Gastrocnemius medialis (tissue), 4 donors: ENCODE measurements at regions of chr1 and their contacts with region 1.

Region 1: GRCh38 chr1:17606826-17607440 is 67.4 kb downstream of the ARHGEF10L start:
- DNase-seq: peak in 1 of 2 donors; percentile 63
- ATAC-seq: peak; percentile 55 to 85
- H3K4me3 ChIP-seq: no peak overlapping the region
- H3K27ac ChIP-seq: peak overlapping the region in 3 of 4 donors; percentile 49 to 73 (median 65)
- H3K4me1 ChIP-seq: peaks cover 11 to 13% of the 10 kb centered on the region in 2 donors
- H3K27me3 ChIP-seq: no peaks in the 10 kb centered on the region
- CTCF ChIP-seq: peak; percentile 90 to 97 (median 95)
- POLR2A ChIP-seq: no peak

Region 2: DNA sequence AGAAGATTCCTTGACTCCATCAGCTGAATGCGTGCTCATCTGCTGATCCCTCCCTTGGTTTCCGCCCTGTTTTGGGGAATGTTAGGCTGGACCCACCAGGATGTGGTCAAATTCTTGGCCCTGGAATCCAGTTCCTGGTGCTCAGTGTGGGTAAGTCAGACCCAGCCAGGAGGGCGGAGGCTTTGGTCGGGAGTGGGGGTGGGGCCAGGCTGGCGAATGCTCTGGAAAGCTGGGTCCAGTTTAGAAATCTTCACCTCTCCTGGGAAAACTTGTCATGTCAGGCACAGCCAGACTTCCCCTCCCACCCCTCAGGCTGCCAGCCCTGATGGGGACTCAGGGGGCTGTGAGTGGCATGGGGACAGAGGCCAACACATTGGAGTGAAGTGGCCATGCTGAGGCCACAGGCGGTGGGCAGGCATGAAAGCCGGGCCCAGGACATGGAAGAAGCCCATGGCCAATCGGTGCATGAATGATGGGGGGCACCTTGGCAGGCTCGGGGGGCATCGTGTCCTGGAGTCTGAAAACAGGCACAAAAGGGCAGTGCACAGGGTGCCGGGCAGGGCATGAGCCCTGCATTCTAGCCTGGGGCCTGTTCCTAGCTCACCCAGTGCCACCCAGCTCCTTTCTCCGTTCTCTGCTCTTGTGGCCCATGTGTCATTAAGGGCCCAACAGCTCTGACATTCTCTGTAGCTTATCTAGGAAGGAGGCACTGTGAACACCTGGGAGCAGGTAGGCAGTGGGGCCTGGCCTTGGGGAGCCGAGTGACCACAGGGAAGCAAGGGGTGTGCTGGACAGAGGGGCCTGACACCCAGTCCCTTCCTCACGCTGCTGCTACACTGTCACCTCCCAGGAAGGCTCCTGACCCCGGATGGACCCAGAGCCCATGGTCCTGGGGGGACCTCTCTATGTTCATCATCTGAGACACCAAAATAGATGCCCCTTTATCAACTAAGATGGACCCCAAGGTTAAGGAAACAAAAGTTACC is 416.6 kb before region 1 on chr1:
- in situ Hi-C with region 1: no loop called
- intact Hi-C with region 1: no loop called
- DNase-seq: no peak
- ATAC-seq: no peak
- H3K4me3 ChIP-seq: no peak overlapping the region
- H3K27ac ChIP-seq: no peak overlapping the region
- H3K4me1 ChIP-seq: no peaks in the 10 kb centered on the region
- H3K27me3 ChIP-seq: no peaks in the 10 kb centered on the region
- CTCF ChIP-seq: no peak
- POLR2A ChIP-seq: no peak

Region 3: GRCh38 chr1:17419626-17420328 is 187.2 kb before region 1 on chr1:
- in situ Hi-C with region 1: loop called in 1 of 4 experiments (anchors 5 kb)
- intact Hi-C with region 1: loop called (anchors 5 kb)
- DNase-seq: peak; percentile 35 to 79
- ATAC-seq: peak; percentile 89 to 96
- H3K4me3 ChIP-seq: peak overlapping the region in 3 of 4 donors; percentile 5 to 34 (median 25)
- H3K27ac ChIP-seq: peak overlapping the region; percentile 70 to 84 (median 78)
- H3K4me1 ChIP-seq: peaks cover 6 to 8% of the 10 kb centered on the region in 2 donors
- H3K27me3 ChIP-seq: no peaks in the 10 kb centered on the region
- CTCF ChIP-seq: peak; percentile 96 to 100 (median 98)
- POLR2A ChIP-seq: peak in 1 of 2 donors; percentile 27

Region 4: DNA sequence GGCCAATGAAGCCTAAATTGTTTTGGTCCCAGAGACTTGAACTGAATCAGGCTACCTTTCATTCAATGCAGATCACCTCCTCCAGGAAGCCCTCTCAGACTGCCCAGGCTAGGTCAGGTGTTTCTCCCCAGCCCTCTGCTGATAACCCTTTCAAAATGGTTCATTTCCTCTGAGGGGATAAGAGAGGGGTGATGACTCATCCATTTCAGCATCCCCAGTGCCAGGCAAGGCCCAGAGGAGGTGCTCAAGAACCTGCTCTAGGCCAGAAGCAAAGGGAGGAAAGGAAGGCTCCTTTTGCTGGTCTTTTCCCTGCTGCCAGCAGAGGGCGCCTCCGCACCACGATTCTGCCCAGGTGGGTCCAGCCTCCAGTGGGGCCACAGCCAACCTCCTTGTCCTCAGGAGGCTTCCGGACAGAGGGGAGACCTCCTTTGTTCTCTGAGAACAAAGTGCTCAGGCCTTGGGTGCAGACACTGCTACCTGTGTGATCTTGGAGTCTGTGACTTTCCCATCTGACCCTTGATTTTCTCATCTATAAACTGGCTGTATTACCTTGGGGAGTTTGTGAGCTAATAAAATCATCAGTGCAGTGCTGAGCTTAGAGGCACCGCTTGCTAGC is 112.7 kb before region 1 on chr1:
- in situ Hi-C with region 1: no loop called
- intact Hi-C with region 1: loop called (anchors 2 kb)
- DNase-seq: peak; percentile 29 to 48
- ATAC-seq: peak; percentile 81 to 83
- H3K4me3 ChIP-seq: no peak overlapping the region
- H3K27ac ChIP-seq: no peak overlapping the region
- H3K4me1 ChIP-seq: no peaks in the 10 kb centered on the region
- H3K27me3 ChIP-seq: no peaks in the 10 kb centered on the region
- CTCF ChIP-seq: peak; percentile 70 to 89 (median 82)
- POLR2A ChIP-seq: no peak

Region 5: GRCh38 chr1:17502326-17502778 is 104.6 kb before region 1 on chr1:
- in situ Hi-C with region 1: loop called (anchors 5 kb)
- intact Hi-C with region 1: loop called (anchors 1 kb)
- DNase-seq: peak; percentile 81 to 86
- ATAC-seq: peak; percentile 95 to 97
- H3K4me3 ChIP-seq: no peak overlapping the region
- H3K27ac ChIP-seq: peak overlapping the region in 3 of 4 donors; percentile 29 to 74 (median 50)
- H3K4me1 ChIP-seq: peaks cover 9 to 11% of the 10 kb centered on the region in 2 donors
- H3K27me3 ChIP-seq: no peaks in the 10 kb centered on the region
- CTCF ChIP-seq: peak; percentile 84 to 94 (median 93)
- POLR2A ChIP-seq: no peak

Region 6: GRCh38 chr1:17507916-17508315 is 99.0 kb before region 1 on chr1:
- in situ Hi-C with region 1: loop called (anchors 5 kb)
- intact Hi-C with region 1: no loop called
- DNase-seq: no peak
- ATAC-seq: no peak
- H3K4me3 ChIP-seq: no peak overlapping the region
- H3K27ac ChIP-seq: no peak overlapping the region
- H3K4me1 ChIP-seq: peaks cover 3% of the 10 kb centered on the region in 2 donors
- H3K27me3 ChIP-seq: no peaks in the 10 kb centered on the region
- CTCF ChIP-seq: no peak
- POLR2A ChIP-seq: no peak

Region 7: DNA sequence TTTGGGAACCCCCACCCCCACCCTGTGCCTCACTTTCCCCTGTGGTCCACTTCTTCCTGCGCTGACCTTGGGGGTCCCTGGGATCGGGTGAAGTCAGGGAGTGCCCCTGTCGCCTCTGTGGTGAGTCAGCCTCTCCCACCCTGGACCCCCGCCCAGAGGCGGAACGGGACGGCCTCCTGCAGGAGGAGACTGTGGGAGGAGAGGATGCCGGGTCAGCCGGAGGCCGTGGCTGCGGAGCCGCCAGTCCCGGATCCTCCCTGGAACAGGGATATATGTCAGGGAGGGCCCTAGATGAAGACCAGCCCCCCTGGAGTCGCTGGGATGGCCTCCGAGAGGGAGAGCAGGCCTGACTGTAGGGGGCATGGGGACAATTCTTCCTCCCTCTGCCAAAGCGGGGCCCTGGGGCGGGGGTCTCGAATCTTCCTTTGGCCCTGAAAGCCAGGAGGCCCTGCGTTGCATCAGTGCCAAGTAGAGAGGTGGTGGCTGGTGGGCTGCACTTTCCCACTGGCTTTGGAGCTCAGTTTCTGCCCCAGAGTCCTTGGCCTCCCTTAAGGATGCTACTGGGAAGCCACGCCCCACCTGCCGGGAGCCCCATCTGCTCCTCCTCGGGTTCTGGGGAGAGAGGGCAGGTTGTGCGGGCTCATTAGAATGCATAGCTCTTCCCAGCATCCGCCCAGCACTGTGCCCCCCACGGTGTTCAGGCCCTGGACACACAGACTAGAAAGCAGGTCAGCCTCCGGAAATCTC is 66.5 kb before region 1 on chr1:
- in situ Hi-C with region 1: loop called in 1 of 4 experiments (anchors 10 kb)
- intact Hi-C with region 1: no loop called
- DNase-seq: peak in 1 of 2 donors; percentile 45
- ATAC-seq: peak; percentile 42 to 46
- H3K4me3 ChIP-seq: peak overlapping the region; percentile 76 to 96 (median 82)
- H3K27ac ChIP-seq: peak overlapping the region; percentile 81 to 90 (median 90)
- H3K4me1 ChIP-seq: peaks cover 24 to 30% of the 10 kb centered on the region in 2 donors
- H3K27me3 ChIP-seq: no peaks in the 10 kb centered on the region
- CTCF ChIP-seq: no peak
- POLR2A ChIP-seq: no peak

Region 8: DNA sequence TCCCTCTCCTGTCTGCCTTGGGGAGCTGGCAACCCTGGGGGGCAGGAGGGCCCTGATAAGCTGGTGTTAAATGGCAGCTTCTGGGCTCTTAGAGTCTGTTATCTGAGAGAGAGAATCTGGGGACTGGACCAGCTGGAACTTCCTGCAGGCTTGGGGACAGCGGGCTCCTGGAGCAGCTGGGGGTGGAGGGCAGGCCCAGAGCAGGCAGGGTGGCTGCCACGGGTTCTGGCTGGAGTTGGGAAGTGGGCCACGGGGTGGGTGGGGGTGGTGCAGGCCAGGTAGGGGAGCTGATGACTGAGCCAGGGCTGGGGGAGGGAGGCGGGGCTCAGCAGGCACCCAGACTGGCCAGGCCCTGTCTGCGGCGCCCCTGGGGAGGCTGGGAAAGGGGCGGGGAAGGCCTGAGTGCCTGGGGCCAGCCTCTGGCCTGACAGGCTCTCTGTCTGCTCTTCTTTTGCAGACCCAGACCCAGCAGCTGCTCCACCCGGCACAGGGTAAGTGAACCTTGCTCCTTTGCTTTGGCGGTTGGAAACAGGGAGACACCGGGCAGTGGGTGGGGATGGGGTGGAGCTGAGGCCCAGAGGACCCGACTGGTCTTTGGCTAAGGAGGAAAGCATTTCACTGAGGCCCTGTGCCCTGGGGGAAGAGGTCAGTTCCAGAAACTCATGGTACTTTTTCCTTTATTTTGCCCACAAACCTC is 18.8 kb before region 1 on chr1:
- in situ Hi-C with region 1: no loop called
- intact Hi-C with region 1: no loop called
- DNase-seq: no peak
- ATAC-seq: peak in 1 of 2 donors; percentile 36
- H3K4me3 ChIP-seq: peak overlapping the region in 1 of 4 donors; percentile 9
- H3K27ac ChIP-seq: peak overlapping the region; percentile 67 to 82 (median 76)
- H3K4me1 ChIP-seq: peaks cover 19 to 22% of the 10 kb centered on the region in 2 donors
- H3K27me3 ChIP-seq: no peaks in the 10 kb centered on the region
- CTCF ChIP-seq: no peak
- POLR2A ChIP-seq: no peak

Region 9: GRCh38 chr1:17648457-17649145 is 41.7 kb after region 1 on chr1:
- in situ Hi-C with region 1: no loop called
- intact Hi-C with region 1: no loop called
- DNase-seq: no peak
- ATAC-seq: peak in 1 of 2 donors; percentile 31
- H3K4me3 ChIP-seq: no peak overlapping the region
- H3K27ac ChIP-seq: peak overlapping the region; percentile 7 to 57 (median 42)
- H3K4me1 ChIP-seq: peaks cover 11 to 14% of the 10 kb centered on the region in 2 donors
- H3K27me3 ChIP-seq: no peaks in the 10 kb centered on the region
- CTCF ChIP-seq: no peak
- POLR2A ChIP-seq: no peak